GM10248 (cell line): ENCODE measurements at regions of chr17 and their contacts with region 1.

Region 1: GRCh38 chr17:30124273-30124796 is 7.7 kb downstream of the NSRP1 start:
- DNase-seq: no peak
- CTCF ChIP-seq: no peak

Region 2: GRCh38 chr17:30113213-30113612 is 11.1 kb before region 1 on chr17:
- CTCF ChIA-PET with region 1: interaction called, 27 read pairs
- POLR2A ChIA-PET with region 1: no interaction called
- DNase-seq: no peak
- CTCF ChIP-seq: no peak

Region 3: DNA sequence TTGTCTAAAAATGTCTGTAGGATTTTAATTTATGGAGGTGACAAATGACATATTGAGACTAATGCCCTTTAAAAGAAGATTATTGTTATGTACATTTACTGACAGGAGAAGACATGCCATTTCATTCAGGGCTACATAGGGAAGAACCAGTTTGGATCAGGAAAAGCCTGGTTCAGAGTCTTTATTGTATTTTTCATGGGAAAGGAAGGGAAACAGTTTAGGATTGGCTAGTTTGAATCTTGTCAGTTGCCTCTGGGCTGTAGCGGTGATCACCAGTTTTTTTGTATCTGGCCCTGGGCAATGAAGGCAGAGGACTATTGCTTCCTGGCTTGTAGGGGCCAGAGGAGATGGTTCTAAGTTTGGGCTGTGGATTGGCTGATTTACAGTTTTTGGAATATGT is 24.0 kb after region 1 on chr17:
- CTCF ChIA-PET with region 1: interaction called, 33 read pairs
- POLR2A ChIA-PET with region 1: no interaction called
- DNase-seq: no peak
- CTCF ChIP-seq: no peak

Region 4: GRCh38 chr17:30161601-30162000 is 37.3 kb after region 1 on chr17:
- CTCF ChIA-PET with region 1: interaction called, 15 read pairs
- POLR2A ChIA-PET with region 1: no interaction called
- DNase-seq: no peak
- CTCF ChIP-seq: no peak

Region 5: GRCh38 chr17:30236766-30237165 is 112.4 kb after region 1 on chr17:
- CTCF ChIA-PET with region 1: interaction called, 55 read pairs
- POLR2A ChIA-PET with region 1: no interaction called
- DNase-seq: peak; percentile 73
- CTCF ChIP-seq: peak; percentile 39